MCF 10A (cell line): ENCODE measurements at regions of chr11 and their contacts with region 1.

Region 1: DNA sequence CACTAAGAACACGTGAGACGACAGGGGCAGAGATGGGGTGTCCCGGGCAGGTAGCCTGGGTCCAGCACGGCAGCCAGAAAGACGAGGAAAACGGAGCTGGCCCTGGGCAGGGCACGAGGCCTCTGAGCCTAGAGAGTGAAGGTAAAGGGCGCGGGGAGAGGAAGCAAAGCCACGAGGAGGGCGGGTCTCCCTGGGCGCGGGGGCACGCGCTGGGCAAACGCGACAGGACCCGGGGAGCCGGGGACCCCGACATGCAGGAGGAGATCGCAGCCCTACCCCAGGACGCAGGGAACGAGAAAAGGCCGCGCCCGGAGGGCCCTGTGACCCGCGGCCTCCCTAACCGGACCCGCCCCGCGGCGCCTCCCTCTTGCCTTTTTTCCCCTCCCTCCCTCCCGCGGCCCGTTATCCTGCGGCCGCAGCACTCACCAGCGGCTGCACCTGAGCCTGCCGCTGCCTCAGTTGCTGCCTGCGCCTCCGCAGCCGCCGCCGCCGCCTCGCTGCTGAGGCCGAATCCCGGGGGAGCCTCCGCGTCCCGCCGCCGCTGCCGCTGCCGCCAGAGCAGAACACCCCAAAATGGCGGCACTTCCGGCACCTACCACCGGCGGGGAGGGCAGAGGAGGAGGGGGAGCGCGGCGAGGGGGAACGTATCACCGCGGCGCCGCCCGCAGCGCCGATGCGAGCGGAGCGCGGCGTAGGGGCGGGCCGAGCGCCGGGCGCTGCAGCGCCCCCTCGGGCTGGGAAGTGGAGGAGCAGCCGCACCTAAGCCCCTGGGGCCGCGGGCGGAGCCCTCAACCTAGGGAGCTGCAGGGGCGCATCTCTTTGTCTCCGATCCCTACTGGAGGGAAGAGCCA is at the start of gene CELF1:
- DNase-seq: peak; percentile 92
- H3K4me3 Mint-ChIP-seq: peak within 1 kb of the TSS; percentile 100
- H3K27ac Mint-ChIP-seq: peak within 1 kb of the TSS; percentile 96
- H3K4me1 Mint-ChIP-seq: peaks cover 21% of the 10 kb centered on the region
- H3K27me3 Mint-ChIP-seq: no peaks in the 10 kb centered on the region
- CTCF ChIP-seq: peak; percentile 92
- total RNA-seq, gene CELF1: 173 and 189 TPM in 2 replicates

Region 2: GRCh38 chr11:47499614-47500013 is 53.2 kb before region 1 on chr11:
- CTCF ChIA-PET with region 1: interaction called, 4 read pairs
- POLR2A ChIA-PET with region 1: interaction called, 5 read pairs
- intact Hi-C with region 1: loop called (anchors 5 kb)
- DNase-seq: no peak
- H3K4me3 Mint-ChIP-seq: no peak overlapping the region
- H3K27ac Mint-ChIP-seq: peak overlapping the region; percentile 13
- H3K4me1 Mint-ChIP-seq: peaks cover 9% of the 10 kb centered on the region
- H3K27me3 Mint-ChIP-seq: no peaks in the 10 kb centered on the region
- CTCF ChIP-seq: no peak

Region 3: GRCh38 chr11:47523468-47524225 is 29.1 kb before region 1 on chr11:
- CTCF ChIA-PET with region 1: interaction called, 6 read pairs
- POLR2A ChIA-PET with region 1: interaction called, 17 read pairs
- intact Hi-C with region 1: no loop called
- DNase-seq: peak; percentile 83
- H3K4me3 Mint-ChIP-seq: peak overlapping the region; percentile 19
- H3K27ac Mint-ChIP-seq: peak overlapping the region; percentile 47
- H3K4me1 Mint-ChIP-seq: peaks cover 35% of the 10 kb centered on the region
- H3K27me3 Mint-ChIP-seq: no peaks in the 10 kb centered on the region
- CTCF ChIP-seq: no peak

Region 4: DNA sequence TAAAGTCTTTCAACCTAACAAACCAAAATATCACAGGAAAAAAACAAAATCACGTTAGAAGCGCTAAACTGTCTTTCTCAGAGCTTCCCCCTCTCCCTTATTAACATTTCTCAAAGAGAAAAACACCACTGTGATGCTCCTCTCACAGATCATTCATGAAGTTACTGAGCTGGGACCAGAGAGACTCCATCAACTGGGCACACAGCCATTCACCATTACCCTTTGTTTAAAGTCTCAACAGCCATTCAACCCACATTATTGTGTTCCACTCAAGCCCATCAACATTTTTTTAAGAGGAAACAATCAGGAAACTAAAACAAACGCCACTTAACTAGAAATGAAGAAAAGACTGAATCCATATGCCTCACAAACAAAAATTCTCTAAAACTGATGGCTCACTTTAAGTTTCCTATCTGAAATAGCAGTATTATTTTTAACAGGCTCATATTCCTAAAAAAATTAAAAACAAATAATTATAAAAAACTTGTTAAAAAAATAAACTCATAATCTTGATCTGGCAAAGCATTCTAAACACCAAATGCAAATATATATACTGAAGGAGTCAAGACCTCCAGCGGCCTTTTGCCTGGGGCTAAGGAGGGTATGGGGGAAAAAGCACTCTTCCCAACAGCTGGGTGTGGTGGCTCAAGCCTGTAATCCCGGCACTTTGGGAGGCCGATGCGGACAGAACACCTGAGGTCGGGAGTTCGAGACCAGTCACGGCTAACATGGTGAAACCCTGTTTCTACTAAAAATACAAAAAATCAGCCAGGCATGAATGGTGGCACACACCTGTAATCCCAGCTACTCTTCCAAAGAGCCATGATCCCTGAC is 13.8 kb before region 1 on chr11:
- CTCF ChIA-PET with region 1: interaction called, 15 read pairs
- POLR2A ChIA-PET with region 1: interaction called, 61 read pairs
- intact Hi-C with region 1: no loop called
- DNase-seq: no peak
- H3K4me3 Mint-ChIP-seq: no peak overlapping the region
- H3K27ac Mint-ChIP-seq: peak overlapping the region; percentile 93
- H3K4me1 Mint-ChIP-seq: peaks cover 25% of the 10 kb centered on the region
- H3K27me3 Mint-ChIP-seq: no peaks in the 10 kb centered on the region
- CTCF ChIP-seq: no peak

Region 5: GRCh38 chr11:47578524-47579460 is 26.0 kb after region 1 on chr11 and contains the starts of genes KBTBD4 and NDUFS3:
- CTCF ChIA-PET with region 1: interaction called, 9 read pairs
- POLR2A ChIA-PET with region 1: interaction called, 43 read pairs
- intact Hi-C with region 1: no loop called
- DNase-seq: peak; percentile 89
- H3K4me3 Mint-ChIP-seq: peak within 1 kb of the TSS; percentile 93
- H3K27ac Mint-ChIP-seq: peak within 1 kb of the TSS; percentile 93
- H3K4me1 Mint-ChIP-seq: peaks cover 13% of the 10 kb centered on the region
- H3K27me3 Mint-ChIP-seq: no peaks in the 10 kb centered on the region
- CTCF ChIP-seq: no peak
- total RNA-seq, gene KBTBD4: 8.4 and 12.6 TPM in 2 replicates
- total RNA-seq, gene NDUFS3: 117 and 120 TPM in 2 replicates

Region 6: GRCh38 chr11:47656260-47656885 is 103.6 kb after region 1 on chr11:
- CTCF ChIA-PET with region 1: no interaction called
- POLR2A ChIA-PET with region 1: no interaction called
- intact Hi-C with region 1: no loop called
- DNase-seq: no peak
- H3K4me3 Mint-ChIP-seq: no peak overlapping the region
- H3K27ac Mint-ChIP-seq: no peak overlapping the region
- H3K4me1 Mint-ChIP-seq: no peaks in the 10 kb centered on the region
- H3K27me3 Mint-ChIP-seq: peaks cover 16% of the 10 kb centered on the region
- CTCF ChIP-seq: no peak